B cell (primary cell): ENCODE measurements at regions of chr7 and their contacts with region 1.

Region 1: DNA sequence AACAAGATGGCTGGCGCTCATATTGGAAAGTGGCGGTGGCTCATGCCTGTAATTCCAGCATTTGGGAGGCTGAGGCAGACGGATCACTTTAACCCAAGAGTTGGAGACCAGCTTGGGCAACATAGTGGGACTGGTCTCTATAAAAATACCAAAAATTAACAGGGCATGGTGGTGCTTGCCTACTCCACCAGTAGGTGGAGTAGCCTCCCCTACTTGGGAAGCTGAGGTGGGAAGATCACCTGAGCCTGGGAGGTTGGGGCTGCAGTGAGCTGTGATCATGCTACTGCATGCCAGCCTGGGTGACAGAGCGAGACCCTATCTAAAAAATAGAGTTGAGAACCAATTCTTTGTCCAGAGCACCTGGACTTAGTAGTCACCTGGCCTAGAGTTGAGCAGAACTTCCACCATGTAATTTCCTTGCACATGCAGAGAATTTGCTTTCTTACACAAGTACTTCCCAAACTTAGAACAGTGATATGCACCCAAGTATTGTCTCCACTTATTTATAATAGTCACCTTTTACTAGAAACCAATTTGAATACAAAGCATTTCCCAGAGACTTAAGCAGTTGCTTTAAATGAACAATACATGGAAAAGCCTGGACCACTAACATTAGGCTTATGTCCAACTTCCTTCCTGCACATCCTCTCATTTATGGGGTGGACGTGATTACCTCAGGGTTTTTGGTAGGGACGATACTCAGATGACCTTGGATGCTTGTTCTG is 15.9 kb downstream of the LAMB4 start:
- DNase-seq: peak; percentile 55
- ATAC-seq: peak; percentile 69
- H3K4me3 ChIP-seq: no peak overlapping the region
- H3K4me3 Mint-ChIP-seq: no peak overlapping the region
- H3K27ac ChIP-seq: no peak overlapping the region
- H3K27ac Mint-ChIP-seq: no peak overlapping the region
- H3K4me1 ChIP-seq: no peaks in the 10 kb centered on the region
- H3K4me1 Mint-ChIP-seq: peaks cover under 1% of the 10 kb centered on the region
- H3K27me3 ChIP-seq: no peaks in the 10 kb centered on the region
- H3K27me3 Mint-ChIP-seq: no peaks in the 10 kb centered on the region
- CTCF ChIP-seq: peak; percentile 74

Region 2: GRCh38 chr7:108135446-108136190 is 21.3 kb after region 1 on chr7:
- CTCF ChIA-PET with region 1: interaction called, 12 read pairs
- POLR2A ChIA-PET with region 1: no interaction called
- intact Hi-C with region 1: no loop called
- DNase-seq: peak; percentile 70
- ATAC-seq: peak; percentile 92
- H3K4me3 ChIP-seq: peak overlapping the region in 1 of 5 experiments; percentile 14
- H3K4me3 Mint-ChIP-seq: peak overlapping the region; percentile 64
- H3K27ac ChIP-seq: peak overlapping the region; percentile 74 to 81
- H3K27ac Mint-ChIP-seq: peak overlapping the region; percentile 94
- H3K4me1 ChIP-seq: peaks cover 29 to 32% of the 10 kb centered on the region in 2 donors
- H3K4me1 Mint-ChIP-seq: peaks cover 24% of the 10 kb centered on the region
- H3K27me3 ChIP-seq: no peaks in the 10 kb centered on the region
- H3K27me3 Mint-ChIP-seq: no peaks in the 10 kb centered on the region
- CTCF ChIP-seq: no peak

Region 3: DNA sequence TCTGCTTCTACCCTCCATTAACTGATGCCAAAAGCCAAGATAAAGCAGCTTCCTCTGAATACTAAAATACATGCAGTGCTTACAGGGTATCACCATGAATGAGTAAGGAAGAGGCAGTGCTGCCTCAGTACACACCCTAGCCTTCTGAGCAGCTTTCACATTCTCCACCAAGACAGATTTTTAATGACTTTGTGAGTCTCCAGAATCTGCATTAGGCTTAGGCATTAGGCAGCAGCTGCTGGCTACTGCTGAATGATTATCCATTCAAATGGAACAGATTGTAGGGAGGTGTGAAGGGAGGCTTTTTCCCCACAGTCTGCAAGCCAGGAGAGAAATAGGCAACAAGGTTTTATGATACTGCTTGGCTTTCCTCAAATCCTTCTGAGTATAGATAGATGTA is 1750.0 kb after region 1 on chr7:
- CTCF ChIA-PET with region 1: no interaction called
- POLR2A ChIA-PET with region 1: no interaction called
- intact Hi-C with region 1: no loop called
- DNase-seq: no peak
- ATAC-seq: no peak
- H3K4me3 ChIP-seq: no peak overlapping the region
- H3K4me3 Mint-ChIP-seq: no peak overlapping the region
- H3K27ac ChIP-seq: no peak overlapping the region
- H3K27ac Mint-ChIP-seq: no peak overlapping the region
- H3K4me1 ChIP-seq: no peaks in the 10 kb centered on the region
- H3K4me1 Mint-ChIP-seq: no peaks in the 10 kb centered on the region
- H3K27me3 ChIP-seq: no peaks in the 10 kb centered on the region
- H3K27me3 Mint-ChIP-seq: no peaks in the 10 kb centered on the region
- CTCF ChIP-seq: no peak